CD14-positive monocyte (primary cell): ENCODE measurements at regions of chr6 and their contacts with region 1.

Region 1: DNA sequence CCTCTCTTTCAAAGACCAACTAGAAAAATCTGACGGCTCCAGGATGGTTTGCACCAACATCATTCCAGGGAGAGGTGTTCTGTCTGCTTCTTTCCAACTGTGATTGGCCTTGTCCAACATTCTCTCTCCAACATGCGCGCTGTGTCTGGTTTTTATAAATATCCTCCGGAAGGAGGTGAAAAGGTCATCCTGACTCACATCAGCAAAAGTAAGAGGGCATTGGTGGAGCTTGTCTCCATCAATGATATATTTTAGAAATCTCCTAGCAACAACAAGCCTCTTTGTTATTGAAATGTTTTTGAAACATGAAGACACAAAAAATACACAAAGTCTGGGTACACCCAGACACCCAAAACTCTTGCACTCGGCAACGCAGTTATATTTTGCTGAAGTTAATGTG is 475.3 kb upstream of the JARID2 start:
- DNase-seq: peak in 1 of 3 donors; percentile 16
- H3K4me3 ChIP-seq: no peak overlapping the region
- H3K4me3 Mint-ChIP-seq: no peak overlapping the region
- H3K27ac ChIP-seq: no peak overlapping the region
- H3K27ac Mint-ChIP-seq: peak overlapping the region in 3 of 7 donors; percentile 41 to 79 (median 58)
- H3K4me1 ChIP-seq: peaks cover 21 to 28% of the 10 kb centered on the region in 2 donors
- H3K4me1 Mint-ChIP-seq: peaks cover 31% of the 10 kb centered on the region
- H3K27me3 ChIP-seq: no peaks in the 10 kb centered on the region
- H3K27me3 Mint-ChIP-seq: peaks cover 0 to 2% (median 1%) of the 10 kb centered on the region in 3 donors
- CTCF ChIP-seq: no peak

Region 2: GRCh38 chr6:14824484-14825275 is 54.1 kb after region 1 on chr6:
- intact Hi-C with region 1: loop called in 1 of 2 experiments (anchors 10 kb)
- DNase-seq: no peak
- H3K4me3 ChIP-seq: no peak overlapping the region
- H3K4me3 Mint-ChIP-seq: no peak overlapping the region
- H3K27ac ChIP-seq: no peak overlapping the region
- H3K27ac Mint-ChIP-seq: peak overlapping the region in 1 of 7 donors; percentile 76
- H3K4me1 ChIP-seq: peaks cover 31 to 37% of the 10 kb centered on the region in 2 donors
- H3K4me1 Mint-ChIP-seq: peaks cover 48% of the 10 kb centered on the region
- H3K27me3 ChIP-seq: no peaks in the 10 kb centered on the region
- H3K27me3 Mint-ChIP-seq: peaks cover 0 to 1% (median 0%) of the 10 kb centered on the region in 3 donors
- CTCF ChIP-seq: no peak

Region 3: DNA sequence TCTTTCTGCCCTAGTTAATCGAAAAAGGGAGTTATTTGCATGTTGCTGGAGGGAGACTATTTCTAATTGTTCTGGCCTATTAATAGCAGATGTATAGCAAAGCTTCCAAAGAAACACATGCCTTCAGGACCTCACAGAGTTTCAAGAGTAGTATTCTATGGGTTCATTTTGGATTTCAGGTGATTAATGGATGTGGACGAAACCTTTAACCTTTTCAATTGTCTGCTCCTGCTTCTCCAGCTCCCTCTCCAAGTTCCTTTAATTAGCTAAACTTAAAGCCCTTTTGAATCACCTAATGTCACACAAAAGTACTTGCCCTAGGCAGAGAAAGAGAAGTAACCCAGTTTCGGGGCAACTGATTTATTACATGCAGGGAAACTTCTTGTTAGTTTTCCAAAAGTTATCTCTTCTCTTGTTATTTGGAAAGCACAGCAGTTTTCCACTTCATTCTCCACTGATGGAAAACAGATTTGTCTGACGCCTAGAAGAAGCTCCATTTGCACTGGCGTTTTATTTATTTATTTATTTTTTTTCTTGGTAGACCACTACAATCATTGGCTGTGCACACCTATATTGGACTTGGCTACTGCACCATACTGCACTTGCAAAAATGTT is 67.6 kb after region 1 on chr6:
- intact Hi-C with region 1: loop called in 1 of 2 experiments (anchors 10 kb)
- DNase-seq: no peak
- H3K4me3 ChIP-seq: no peak overlapping the region
- H3K4me3 Mint-ChIP-seq: no peak overlapping the region
- H3K27ac ChIP-seq: no peak overlapping the region
- H3K27ac Mint-ChIP-seq: peak overlapping the region in 2 of 7 donors; percentile 3 to 29
- H3K4me1 ChIP-seq: peaks cover 11 to 20% of the 10 kb centered on the region in 2 donors
- H3K4me1 Mint-ChIP-seq: peaks cover 38% of the 10 kb centered on the region
- H3K27me3 ChIP-seq: no peaks in the 10 kb centered on the region
- H3K27me3 Mint-ChIP-seq: peaks cover 0 to 11% (median 3%) of the 10 kb centered on the region in 3 donors
- CTCF ChIP-seq: no peak